H1 (cell line): ENCODE measurements at regions of chr19 and their contacts with region 1.

Region 1: DNA sequence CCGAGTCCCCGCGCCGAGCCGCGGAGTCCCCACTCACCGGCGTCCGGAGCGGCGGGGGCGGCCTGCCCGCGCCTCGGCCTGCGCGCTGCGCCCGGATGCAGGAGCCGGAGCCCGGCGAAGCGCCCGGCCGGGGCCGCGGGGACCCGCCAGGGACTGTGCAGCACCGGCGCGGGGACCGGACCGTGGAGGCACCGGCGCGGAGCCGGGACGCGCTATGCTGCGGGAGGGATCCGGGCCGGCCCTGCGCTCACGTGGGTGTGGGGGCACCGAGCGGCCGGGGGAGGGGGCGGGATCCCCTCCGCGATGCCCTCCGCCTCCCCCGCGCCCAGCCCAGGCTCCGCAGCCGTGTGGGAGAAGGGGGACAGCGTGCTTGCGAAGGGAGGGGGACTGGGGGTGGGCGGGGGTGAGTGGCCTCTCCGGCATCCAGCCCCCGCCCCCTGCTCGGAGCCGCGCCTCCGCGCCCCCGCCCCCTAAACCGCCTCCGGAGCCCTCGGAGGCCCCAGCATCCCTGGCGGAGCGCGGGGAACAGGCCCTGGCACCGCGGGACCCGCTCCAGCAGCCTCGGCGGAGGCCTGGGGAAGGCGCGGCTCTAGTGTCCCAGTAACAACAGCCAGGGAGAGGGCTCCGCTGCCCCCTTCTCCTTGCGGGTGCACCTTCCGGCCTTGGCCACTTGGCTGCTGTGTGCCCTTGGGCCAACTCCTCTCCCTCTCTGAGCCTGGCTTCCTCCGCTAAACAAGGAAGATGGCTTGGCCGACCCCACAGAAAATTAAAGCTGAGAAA is at the start of gene SLC1A6:
- DNase-seq: peak in 1 of 2 experiments; percentile 79
- H3K4me3 ChIP-seq: peak within 1 kb of the TSS; percentile 69 to 86 (median 76)
- H3K27ac ChIP-seq: no peak within 1 kb of the TSS
- H3K4me1 ChIP-seq: peaks cover 0 to 7% (median 3%) of the 10 kb centered on the region in 4 experiments; a peak in 3 of 7 replicates
- H3K27me3 ChIP-seq: peaks cover 0 to 7% (median 0%) of the 10 kb centered on the region in 4 experiments; a peak in 3 of 7 replicates
- CTCF ChIP-seq: no peak
- EP300 ChIP-seq: no peak
- POLR2A ChIP-seq: no peak; a peak in 1 of 3 replicates
- RAD21 ChIP-seq: 0 out of 4 replicates have a peak, but pooled peaks of 1 of the 2 experiments have one; percentile 1
- total RNA-seq, gene SLC1A6: 13.6 and 14.0 TPM in 2 replicates

Region 2: GRCh38 chr19:14968247-14968646 is 11.4 kb before region 1 on chr19:
- CTCF ChIA-PET with region 1: interaction called, 4 read pairs
- POLR2A ChIA-PET with region 1: interaction called, 12 read pairs
- DNase-seq: no peak
- H3K4me3 ChIP-seq: no peak overlapping the region
- H3K27ac ChIP-seq: no peak overlapping the region
- H3K4me1 ChIP-seq: no peaks in the 10 kb centered on the region
- H3K27me3 ChIP-seq: no peaks in the 10 kb centered on the region
- CTCF ChIP-seq: no peak
- EP300 ChIP-seq: no peak
- POLR2A ChIP-seq: no peak
- RAD21 ChIP-seq: no peak